IMR-90 (cell line): ENCODE measurements at regions of chr15 and their contacts with region 1.

Region 1: DNA sequence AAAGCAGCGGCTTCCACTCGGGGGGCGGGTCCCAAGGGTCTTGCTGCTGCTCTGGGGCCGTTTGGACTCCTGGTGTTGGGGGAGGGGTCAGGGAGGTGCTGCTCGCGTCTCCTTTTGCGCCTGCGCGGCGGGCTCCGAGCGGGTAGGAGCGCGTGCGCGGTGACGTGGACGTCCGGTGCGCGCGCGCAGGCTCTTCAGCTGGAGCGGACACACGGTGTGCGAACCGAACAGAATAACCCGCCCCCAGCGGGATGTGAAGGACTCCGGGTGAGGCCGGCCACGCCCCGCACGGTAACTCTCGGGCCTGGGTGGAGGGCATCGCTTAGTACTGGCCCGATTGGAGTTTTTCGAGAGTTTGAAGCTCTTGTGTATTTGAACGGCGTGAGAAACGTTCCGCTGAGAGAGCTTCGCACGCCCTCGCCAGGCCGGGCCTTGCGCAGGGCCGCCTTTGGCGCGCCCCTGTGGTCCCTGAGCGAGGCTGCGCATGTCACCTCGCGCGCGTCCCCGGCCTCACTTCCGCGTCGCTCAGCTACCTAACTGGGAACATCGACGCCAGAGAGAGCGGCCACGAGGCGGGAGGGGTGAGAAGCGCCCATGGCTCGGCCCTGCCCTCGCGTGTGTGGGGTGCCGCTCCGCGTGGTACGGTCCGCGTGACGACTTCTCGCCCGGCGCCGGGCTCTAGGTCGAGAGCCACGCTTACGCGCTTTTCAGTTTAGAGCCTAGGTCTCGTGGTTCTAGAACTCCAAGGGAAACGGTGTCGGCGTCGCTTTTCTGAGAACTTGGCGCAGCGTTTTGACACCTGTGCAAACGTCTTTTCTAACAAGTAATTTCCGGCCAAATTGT is at the start of gene MGA:
- DNase-seq: peak; percentile 92
- ATAC-seq: peak; percentile 89
- H3K4me3 ChIP-seq: peak within 1 kb of the TSS; percentile 64
- H3K27ac ChIP-seq: peak within 1 kb of the TSS; percentile 80
- H3K4me1 ChIP-seq: peaks cover 6% of the 10 kb centered on the region
- H3K27me3 ChIP-seq: no peaks in the 10 kb centered on the region
- CTCF ChIP-seq: 0 out of 2 replicates have a peak, but pooled peaks have one; percentile 22
- POLR2A ChIP-seq: peak; percentile 56; the same call in 1 of the 2 replicates
- RAD21 ChIP-seq: 0 out of 2 replicates have a peak, but pooled peaks have one; percentile 5
- total RNA-seq, gene MGA: 38.0 and 48.3 TPM in 2 replicates

Region 2: GRCh38 chr15:41429003-41429890 is 231.2 kb before region 1 on chr15:
- CTCF ChIA-PET with region 1: no interaction called
- POLR2A ChIA-PET with region 1: no interaction called
- dilution Hi-C with region 1: no loop called
- in situ Hi-C with region 1: no loop called
- intact Hi-C with region 1: no loop called
- DNase-seq: peak; percentile 19
- ATAC-seq: no peak
- H3K4me3 ChIP-seq: no peak overlapping the region
- H3K27ac ChIP-seq: no peak overlapping the region
- H3K4me1 ChIP-seq: 0 out of 2 replicates have a peak, but pooled peaks cover 1% of the 10 kb centered on the region
- H3K27me3 ChIP-seq: no peaks in the 10 kb centered on the region
- CTCF ChIP-seq: no peak
- POLR2A ChIP-seq: no peak
- RAD21 ChIP-seq: no peak

Region 3: GRCh38 chr15:41621200-41622193 is 39.0 kb before region 1 on chr15:
- CTCF ChIA-PET with region 1: no interaction called
- POLR2A ChIA-PET with region 1: no interaction called
- dilution Hi-C with region 1: no loop called
- in situ Hi-C with region 1: no loop called
- intact Hi-C with region 1: loop called (anchors 5 kb)
- DNase-seq: peak; percentile 77
- ATAC-seq: peak; percentile 91
- H3K4me3 ChIP-seq: peak overlapping the region; percentile 70
- H3K27ac ChIP-seq: peak overlapping the region; percentile 33; the same call in 1 of the 2 replicates
- H3K4me1 ChIP-seq: no peaks in the 10 kb centered on the region
- H3K27me3 ChIP-seq: no peaks in the 10 kb centered on the region
- CTCF ChIP-seq: no peak
- POLR2A ChIP-seq: no peak
- RAD21 ChIP-seq: no peak

Region 4: GRCh38 chr15:42002333-42002732 is 341.9 kb after region 1 on chr15:
- CTCF ChIA-PET with region 1: no interaction called
- POLR2A ChIA-PET with region 1: no interaction called
- dilution Hi-C with region 1: no loop called
- in situ Hi-C with region 1: no loop called
- intact Hi-C with region 1: no loop called
- DNase-seq: no peak
- ATAC-seq: no peak
- H3K4me3 ChIP-seq: no peak overlapping the region
- H3K27ac ChIP-seq: no peak overlapping the region
- H3K4me1 ChIP-seq: no peaks in the 10 kb centered on the region
- H3K27me3 ChIP-seq: peaks cover 77% of the 10 kb centered on the region
- CTCF ChIP-seq: no peak
- POLR2A ChIP-seq: no peak
- RAD21 ChIP-seq: no peak